Heart left ventricle (tissue), 16 donors: ENCODE measurements at regions of chr17 and their contacts with region 1.

Region 1: GRCh38 chr17:8222630-8223356 is 12.4 kb upstream of the AURKB start:
- DNase-seq: peak; percentile 94 to 97 (median 95)
- ATAC-seq: peak; percentile 70 to 81 (median 74)
- H3K4me3 ChIP-seq: peak overlapping the region; percentile 49 to 82 (median 69)
- H3K27ac ChIP-seq: peak overlapping the region; percentile 93 to 99 (median 98)
- H3K4me1 ChIP-seq: peaks cover 0 to 31% (median 14%) of the 10 kb centered on the region in 12 donors
- H3K27me3 ChIP-seq: no peaks in the 10 kb centered on the region
- CTCF ChIP-seq: no peak
- POLR2A ChIP-seq: peak in 1 of 2 donors; percentile 83

Region 2: GRCh38 chr17:8376271-8377067 is 153.7 kb after region 1 on chr17 and contains the start of gene KRABD2:
- intact Hi-C with region 1: loop called in 1 of 10 experiments (anchors 10 kb)
- DNase-seq: peak; percentile 93 to 96 (median 95)
- ATAC-seq: peak; percentile 92 to 98 (median 97)
- H3K4me3 ChIP-seq: peak within 1 kb of the TSS; percentile 40 to 97 (median 81)
- H3K27ac ChIP-seq: peak within 1 kb of the TSS; percentile 69 to 98 (median 93)
- H3K4me1 ChIP-seq: peaks cover 0 to 52% (median 35%) of the 10 kb centered on the region in 12 donors
- H3K27me3 ChIP-seq: no peaks in the 10 kb centered on the region
- CTCF ChIP-seq: peak; percentile 35 to 86 (median 51)
- POLR2A ChIP-seq: peak in 1 of 2 donors; percentile 82

Region 3: GRCh38 chr17:8503368-8503767 is 280.6 kb after region 1 on chr17:
- intact Hi-C with region 1: no loop called
- DNase-seq: peak in 4 of 5 donors; percentile 51 to 69 (median 56)
- ATAC-seq: peak; percentile 69 to 91 (median 85)
- H3K4me3 ChIP-seq: no peak overlapping the region
- H3K27ac ChIP-seq: peak overlapping the region in 5 of 12 donors; percentile 26 to 83 (median 54)
- H3K4me1 ChIP-seq: peaks cover 0 to 17% (median 3%) of the 10 kb centered on the region in 12 donors
- H3K27me3 ChIP-seq: no peaks in the 10 kb centered on the region
- CTCF ChIP-seq: no peak
- POLR2A ChIP-seq: no peak